Ovary (tissue), 10 donors: ENCODE measurements at regions of chr3 and their contacts with region 1.

Region 1: DNA sequence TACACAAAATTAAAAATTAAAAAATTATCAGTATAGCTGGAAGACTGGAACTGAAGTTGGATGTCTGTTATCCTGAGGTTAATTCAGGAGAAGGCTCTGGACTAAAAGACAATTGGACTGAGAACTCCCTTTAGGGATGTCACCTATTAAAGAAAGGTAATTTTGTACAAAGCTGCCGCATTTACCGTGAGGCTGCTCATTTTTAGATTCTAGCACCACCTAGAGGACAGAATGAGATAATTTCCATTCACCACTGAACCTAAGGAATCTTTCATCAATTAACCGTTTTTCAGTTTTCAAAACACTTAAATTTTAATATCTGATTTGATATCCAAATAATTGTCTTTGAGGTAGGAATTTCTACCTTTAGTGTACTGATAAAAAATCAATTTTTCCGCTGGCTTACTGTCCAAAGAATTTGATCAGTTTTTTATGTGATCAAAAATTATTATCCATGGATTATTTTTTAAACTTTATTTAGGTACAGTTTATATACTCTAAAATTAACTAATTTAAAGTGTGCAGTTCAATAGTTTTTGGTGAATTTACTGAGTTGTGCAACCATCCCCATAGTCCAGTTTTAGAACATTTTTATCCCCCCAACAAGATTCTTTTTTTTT is 106.7 kb upstream of the TNIK start:
- DNase-seq: no peak
- H3K4me3 ChIP-seq: no peak overlapping the region
- H3K27ac ChIP-seq: no peak overlapping the region
- H3K4me1 ChIP-seq: no peaks in the 10 kb centered on the region
- H3K27me3 ChIP-seq: no peaks in the 10 kb centered on the region
- CTCF ChIP-seq: peak in 2 of 3 donors; percentile 66 to 71
- EP300 ChIP-seq: no peak
- POLR2A ChIP-seq: no peak

Region 2: DNA sequence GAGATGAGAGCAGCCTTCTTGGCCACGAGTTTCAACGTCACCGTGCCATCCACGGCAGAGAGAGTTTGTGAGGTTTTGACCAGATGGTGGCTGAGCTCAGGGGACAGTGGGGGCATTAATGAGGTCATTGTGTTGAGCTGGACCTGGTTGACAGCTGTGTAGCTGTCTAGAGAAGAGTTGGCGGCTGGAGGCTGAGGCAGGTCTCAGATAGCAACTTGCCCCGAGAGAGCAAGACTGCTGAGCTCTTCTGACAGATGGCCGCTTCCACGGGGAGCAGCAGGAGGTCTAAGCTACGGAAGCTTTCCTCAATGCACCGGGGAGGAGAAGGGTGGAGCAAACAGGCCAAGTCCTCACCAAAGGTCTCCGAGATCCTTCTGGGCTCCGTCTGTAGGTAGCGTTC is 613.7 kb before region 1 on chr3:
- intact Hi-C with region 1: loop called in 1 of 4 experiments (anchors 10 kb)
- DNase-seq: no peak
- H3K4me3 ChIP-seq: no peak overlapping the region
- H3K27ac ChIP-seq: no peak overlapping the region
- H3K4me1 ChIP-seq: no peaks in the 10 kb centered on the region
- H3K27me3 ChIP-seq: no peaks in the 10 kb centered on the region
- CTCF ChIP-seq: no peak
- EP300 ChIP-seq: no peak
- POLR2A ChIP-seq: no peak

Region 3: DNA sequence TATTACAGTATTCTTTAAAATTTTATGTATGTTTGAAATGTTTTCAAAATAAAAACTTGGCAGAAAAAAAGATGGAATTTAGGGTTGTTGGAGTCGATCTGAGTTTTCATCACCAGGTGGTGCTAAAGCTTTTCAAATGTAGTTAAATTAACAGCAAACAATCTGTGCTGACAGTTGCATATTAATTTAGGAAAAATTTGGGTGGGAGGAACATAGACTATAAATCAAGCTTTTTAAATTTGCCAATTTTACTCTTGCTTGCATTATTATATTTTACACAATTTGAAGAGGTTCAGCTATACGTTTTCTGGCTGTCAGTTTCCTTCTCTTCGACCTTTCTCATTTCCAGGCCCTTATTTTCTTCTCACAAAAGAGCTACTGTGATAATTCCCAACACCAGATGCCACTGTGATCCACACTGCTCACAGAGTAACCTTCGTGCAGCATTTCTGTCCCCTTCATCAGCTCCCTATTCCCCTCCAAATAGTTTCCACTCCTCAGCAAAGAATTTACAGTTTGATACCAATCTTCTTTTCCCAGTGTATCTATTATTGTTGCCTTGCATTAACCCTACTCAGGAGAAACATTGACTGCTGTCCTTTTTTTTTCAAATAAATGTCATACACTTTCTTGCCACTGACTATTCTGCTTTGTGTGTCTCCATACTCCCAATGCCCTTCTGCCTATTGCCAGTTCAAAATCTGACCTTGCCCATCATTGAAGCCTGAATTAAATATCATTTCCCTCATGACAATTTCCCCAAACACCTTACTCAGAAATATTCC is 605.1 kb before region 1 on chr3:
- intact Hi-C with region 1: loop called (anchors 5 to 10 kb)
- DNase-seq: no peak
- H3K4me3 ChIP-seq: no peak overlapping the region
- H3K27ac ChIP-seq: no peak overlapping the region
- H3K4me1 ChIP-seq: no peaks in the 10 kb centered on the region
- H3K27me3 ChIP-seq: no peaks in the 10 kb centered on the region
- CTCF ChIP-seq: peak; percentile 34 to 64 (median 44)
- EP300 ChIP-seq: no peak
- POLR2A ChIP-seq: no peak

Region 4: DNA sequence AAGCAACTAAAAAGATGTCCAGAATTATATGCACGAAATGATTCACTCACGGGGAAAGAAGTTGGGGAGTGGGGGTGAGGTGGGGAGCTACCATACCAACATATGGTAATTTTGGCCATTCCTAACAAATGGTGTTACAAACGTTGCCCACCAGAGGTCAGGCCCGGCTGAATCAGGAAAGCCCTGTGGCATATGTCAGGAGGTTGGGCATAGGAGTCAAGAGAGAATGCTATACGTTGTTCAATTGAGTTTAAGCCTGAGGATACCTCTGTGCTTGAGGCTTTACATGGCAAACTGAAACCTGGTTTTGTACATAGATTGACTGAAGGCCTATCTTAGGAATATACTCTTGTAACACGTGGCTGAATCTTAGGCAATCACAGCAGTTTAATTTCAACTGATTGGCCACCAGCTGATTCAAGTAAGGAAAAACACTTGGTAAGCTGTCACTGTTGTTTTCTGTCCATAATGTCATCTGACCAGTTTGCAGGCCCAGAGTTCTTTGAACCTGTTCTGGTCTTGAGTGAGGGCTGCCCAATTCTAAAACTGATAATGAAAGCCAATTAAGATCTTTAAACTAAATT is 517.0 kb before region 1 on chr3:
- intact Hi-C with region 1: loop called in 1 of 4 experiments (anchors 10 kb)
- DNase-seq: peak in 1 of 5 donors; percentile 33
- H3K4me3 ChIP-seq: no peak overlapping the region
- H3K27ac ChIP-seq: no peak overlapping the region
- H3K4me1 ChIP-seq: no peaks in the 10 kb centered on the region
- H3K27me3 ChIP-seq: no peaks in the 10 kb centered on the region
- CTCF ChIP-seq: peak in 2 of 3 donors; percentile 26 to 36
- EP300 ChIP-seq: no peak
- POLR2A ChIP-seq: no peak

Region 5: DNA sequence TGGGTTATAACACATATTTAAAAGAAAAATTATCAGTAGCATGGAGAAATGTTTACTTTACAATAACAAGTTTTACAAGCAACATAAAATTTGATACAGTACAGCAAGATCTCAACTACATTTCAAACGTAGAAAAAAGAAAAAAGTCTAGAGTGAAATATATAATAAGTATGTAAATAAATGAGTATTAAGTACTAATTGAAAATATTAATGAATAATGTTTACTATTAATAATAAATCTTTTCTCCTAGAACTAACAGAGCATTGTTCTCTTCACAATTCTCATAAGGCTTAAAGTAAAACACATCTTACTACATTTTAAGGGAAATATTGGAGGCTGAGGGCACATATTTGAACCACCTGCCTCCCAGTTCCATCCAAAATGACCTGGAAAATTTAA is 348.4 kb after region 1 on chr3:
- intact Hi-C with region 1: no loop called
- DNase-seq: no peak
- H3K4me3 ChIP-seq: no peak overlapping the region
- H3K27ac ChIP-seq: no peak overlapping the region
- H3K4me1 ChIP-seq: no peaks in the 10 kb centered on the region
- H3K27me3 ChIP-seq: no peaks in the 10 kb centered on the region
- CTCF ChIP-seq: no peak
- EP300 ChIP-seq: no peak
- POLR2A ChIP-seq: no peak

Region 6: DNA sequence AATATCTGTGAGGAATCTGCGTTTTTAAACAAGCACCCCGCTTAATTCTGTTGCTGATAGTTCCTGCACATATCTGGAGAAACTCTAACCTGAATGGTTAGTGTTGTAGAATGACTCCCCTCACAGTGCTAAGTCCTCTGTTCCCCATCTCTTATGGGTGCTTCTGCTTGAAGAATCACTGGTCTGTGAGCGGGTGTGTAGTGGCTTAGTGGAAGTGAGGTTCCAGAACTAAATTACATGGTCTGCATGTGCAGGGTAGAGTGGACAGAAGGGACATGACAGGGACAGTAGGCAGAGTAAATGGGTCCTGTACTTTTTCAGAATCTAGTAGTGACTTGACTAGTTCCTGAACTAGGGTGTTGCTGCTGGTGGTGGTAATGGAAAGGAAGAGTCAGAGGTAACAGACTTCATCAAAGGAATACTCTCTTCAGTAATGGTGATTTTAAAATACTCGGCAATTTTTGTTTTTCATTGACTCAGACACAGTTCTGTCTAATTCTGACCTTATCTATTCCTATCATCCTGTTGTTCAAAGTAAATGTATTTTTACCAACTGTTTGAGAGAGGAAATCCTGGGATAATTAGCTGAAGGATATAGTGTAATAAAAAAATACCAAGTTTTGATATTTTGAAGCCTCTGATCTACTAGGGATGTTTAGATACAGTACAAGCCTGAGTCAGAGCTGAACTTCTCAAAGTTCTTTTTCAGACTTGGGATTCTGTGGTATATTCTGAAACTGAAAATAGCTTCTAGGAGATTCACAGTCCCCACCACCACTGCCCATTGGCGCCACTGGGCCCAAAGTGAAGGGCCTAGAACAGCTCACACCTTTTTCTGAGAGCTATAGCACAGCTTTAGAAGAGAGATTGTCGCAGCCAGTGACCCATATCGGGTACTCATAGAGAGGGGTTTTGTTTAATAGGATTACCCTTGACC is 528.0 kb after region 1 on chr3:
- intact Hi-C with region 1: no loop called
- DNase-seq: no peak
- H3K4me3 ChIP-seq: no peak overlapping the region
- H3K27ac ChIP-seq: no peak overlapping the region
- H3K4me1 ChIP-seq: peaks cover 9% of the 10 kb centered on the region
- H3K27me3 ChIP-seq: no peaks in the 10 kb centered on the region
- CTCF ChIP-seq: no peak
- EP300 ChIP-seq: no peak
- POLR2A ChIP-seq: no peak